B cell (primary cell): ENCODE measurements at regions of chr3 and their contacts with region 1.

Region 1: GRCh38 chr3:140972833-140973232 is 31.2 kb downstream of the SLC25A36 start:
- DNase-seq: peak; percentile 15
- ATAC-seq: no peak
- H3K4me3 ChIP-seq: no peak overlapping the region
- H3K4me3 Mint-ChIP-seq: no peak overlapping the region
- H3K27ac ChIP-seq: no peak overlapping the region
- H3K27ac Mint-ChIP-seq: no peak overlapping the region
- H3K4me1 ChIP-seq: no peaks in the 10 kb centered on the region
- H3K4me1 Mint-ChIP-seq: no peaks in the 10 kb centered on the region
- H3K27me3 ChIP-seq: no peaks in the 10 kb centered on the region
- H3K27me3 Mint-ChIP-seq: no peaks in the 10 kb centered on the region
- CTCF ChIP-seq: peak; percentile 34

Region 2: GRCh38 chr3:140898340-140899180 is 74.3 kb before region 1 on chr3:
- CTCF ChIA-PET with region 1: interaction called, 4 read pairs
- POLR2A ChIA-PET with region 1: no interaction called
- intact Hi-C with region 1: loop called (anchors 1 kb)
- DNase-seq: peak; percentile 54
- ATAC-seq: peak; percentile 53
- H3K4me3 ChIP-seq: no peak overlapping the region
- H3K4me3 Mint-ChIP-seq: no peak overlapping the region
- H3K27ac ChIP-seq: no peak overlapping the region
- H3K27ac Mint-ChIP-seq: no peak overlapping the region
- H3K4me1 ChIP-seq: no peaks in the 10 kb centered on the region
- H3K4me1 Mint-ChIP-seq: no peaks in the 10 kb centered on the region
- H3K27me3 ChIP-seq: peaks cover 0 to 6% (median 2%) of the 10 kb centered on the region in 4 experiments
- H3K27me3 Mint-ChIP-seq: peaks cover 36% of the 10 kb centered on the region
- CTCF ChIP-seq: peak; percentile 76

Region 3: DNA sequence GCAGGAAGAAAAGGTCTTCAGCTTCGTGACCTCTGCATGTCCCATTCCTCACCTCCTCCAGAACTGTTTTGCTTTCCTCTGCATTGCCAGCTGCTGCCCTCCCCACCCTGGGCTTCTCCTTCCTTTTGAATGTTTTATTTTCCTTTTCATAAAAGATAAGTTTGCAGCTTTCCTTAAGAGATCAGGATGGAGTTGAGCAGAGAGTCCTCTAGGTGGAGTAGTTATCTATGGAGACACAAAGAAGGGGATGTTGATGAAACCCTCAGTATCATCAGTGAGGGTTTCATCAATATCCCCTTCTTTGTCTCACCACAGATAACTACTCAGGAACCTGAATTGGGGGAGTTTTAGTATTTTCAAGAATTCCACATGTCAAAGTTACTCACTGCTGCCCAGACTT is 50.2 kb before region 1 on chr3:
- CTCF ChIA-PET with region 1: interaction called, 9 read pairs
- POLR2A ChIA-PET with region 1: no interaction called
- intact Hi-C with region 1: loop called (anchors 10 kb)
- DNase-seq: peak; percentile 38
- ATAC-seq: peak; percentile 43
- H3K4me3 ChIP-seq: no peak overlapping the region
- H3K4me3 Mint-ChIP-seq: no peak overlapping the region
- H3K27ac ChIP-seq: no peak overlapping the region
- H3K27ac Mint-ChIP-seq: no peak overlapping the region
- H3K4me1 ChIP-seq: no peaks in the 10 kb centered on the region
- H3K4me1 Mint-ChIP-seq: no peaks in the 10 kb centered on the region
- H3K27me3 ChIP-seq: peaks cover 0 to 4% (median 2%) of the 10 kb centered on the region in 4 experiments
- H3K27me3 Mint-ChIP-seq: peaks cover 28% of the 10 kb centered on the region
- CTCF ChIP-seq: peak; percentile 41

Region 4: DNA sequence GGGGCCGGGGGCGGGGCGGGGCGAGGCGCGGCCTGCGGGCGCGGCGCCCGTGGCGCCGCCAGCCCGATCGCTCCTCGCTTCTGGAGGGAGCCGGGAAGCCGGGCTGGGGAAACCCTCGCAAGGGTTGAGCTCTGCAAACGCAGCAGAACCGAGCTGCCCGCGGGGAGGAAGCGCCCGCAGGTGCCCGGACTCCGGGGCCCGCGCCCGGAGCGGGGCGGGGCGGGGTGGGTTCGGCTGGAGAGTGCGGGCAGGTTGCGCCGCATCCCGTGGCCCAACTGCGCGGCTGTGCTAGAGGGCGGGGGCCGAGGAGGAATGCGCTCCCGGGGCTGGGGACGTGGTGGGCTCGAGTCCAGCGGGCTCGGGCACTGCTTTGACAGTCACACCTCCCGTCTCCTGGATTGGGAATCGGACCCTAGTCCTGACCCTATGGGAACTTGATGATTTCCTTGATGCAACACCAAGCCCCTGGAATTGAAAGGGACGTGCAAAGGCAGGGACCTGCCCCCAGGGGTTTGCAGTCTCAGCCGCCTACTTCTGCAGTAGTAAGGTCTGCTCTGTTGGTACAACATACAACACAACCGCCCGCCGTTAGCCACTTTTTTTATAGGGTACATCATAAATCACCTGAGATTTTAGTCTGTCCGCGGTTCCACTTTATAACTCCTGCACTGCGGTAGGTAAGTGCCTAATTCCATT is 429.8 kb after region 1 on chr3:
- CTCF ChIA-PET with region 1: no interaction called
- POLR2A ChIA-PET with region 1: no interaction called
- intact Hi-C with region 1: no loop called
- DNase-seq: no peak
- ATAC-seq: peak; percentile 61
- H3K4me3 ChIP-seq: peak overlapping the region; percentile 37 to 83 (median 78)
- H3K4me3 Mint-ChIP-seq: peak overlapping the region; percentile 95
- H3K27ac ChIP-seq: peak overlapping the region; percentile 35 to 90
- H3K27ac Mint-ChIP-seq: peak overlapping the region; percentile 98
- H3K4me1 ChIP-seq: peaks cover 8 to 14% of the 10 kb centered on the region in 2 donors
- H3K4me1 Mint-ChIP-seq: peaks cover 48% of the 10 kb centered on the region
- H3K27me3 ChIP-seq: no peaks in the 10 kb centered on the region
- H3K27me3 Mint-ChIP-seq: no peaks in the 10 kb centered on the region
- CTCF ChIP-seq: no peak